Esophagus muscularis mucosa (tissue), 4 donors: ENCODE measurements at regions of chr5 and their contacts with region 1.

Region 1: GRCh38 chr5:172764849-172765765 is 5.9 kb downstream of the DUSP1 start:
- DNase-seq: peak; percentile 99
- H3K4me3 ChIP-seq: peak overlapping the region; percentile 88 to 98 (median 90)
- H3K27ac ChIP-seq: peak overlapping the region; percentile 99 to 100 (median 100)
- H3K4me1 ChIP-seq: peaks cover 28 to 40% (median 35%) of the 10 kb centered on the region in 4 donors
- H3K27me3 ChIP-seq: no peaks in the 10 kb centered on the region
- CTCF ChIP-seq: peak in 1 of 3 experiments; percentile 15
- EP300 ChIP-seq: peak; percentile 40
- POLR2A ChIP-seq: no peak

Region 2: GRCh38 chr5:172044631-172045314 is 720.3 kb before region 1 on chr5:
- intact Hi-C with region 1: no loop called
- DNase-seq: no peak
- H3K4me3 ChIP-seq: no peak overlapping the region
- H3K27ac ChIP-seq: no peak overlapping the region
- H3K4me1 ChIP-seq: peaks cover 0 to 8% (median 3%) of the 10 kb centered on the region in 4 donors
- H3K27me3 ChIP-seq: no peaks in the 10 kb centered on the region
- CTCF ChIP-seq: no peak
- EP300 ChIP-seq: no peak
- POLR2A ChIP-seq: no peak

Region 3: GRCh38 chr5:172266676-172267092 is 498.4 kb before region 1 on chr5:
- intact Hi-C with region 1: no loop called
- DNase-seq: no peak
- H3K4me3 ChIP-seq: no peak overlapping the region
- H3K27ac ChIP-seq: peak overlapping the region in 1 of 4 donors; percentile 44
- H3K4me1 ChIP-seq: peaks cover 16 to 27% (median 21%) of the 10 kb centered on the region in 4 donors
- H3K27me3 ChIP-seq: no peaks in the 10 kb centered on the region
- CTCF ChIP-seq: no peak
- EP300 ChIP-seq: no peak
- POLR2A ChIP-seq: no peak

Region 4: DNA sequence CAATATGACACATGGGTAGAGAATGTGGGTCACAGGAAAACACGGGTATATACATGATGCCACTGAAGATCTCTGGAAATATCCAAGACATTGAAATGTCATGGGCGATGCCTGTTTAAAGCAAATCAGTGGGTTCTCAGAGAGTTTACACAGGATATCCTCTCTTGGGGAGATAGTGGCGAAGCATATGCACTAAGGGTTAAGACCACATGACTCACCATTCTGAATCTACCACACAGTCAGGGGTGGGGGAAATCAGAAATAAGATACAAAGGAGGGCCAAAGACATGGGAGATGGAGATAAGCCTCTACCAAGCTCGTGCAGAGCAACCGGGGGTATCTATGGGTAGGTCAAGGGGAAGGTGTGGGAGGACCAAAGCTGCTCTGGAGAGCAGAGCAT is 369.6 kb before region 1 on chr5:
- intact Hi-C with region 1: no loop called
- DNase-seq: no peak
- H3K4me3 ChIP-seq: no peak overlapping the region
- H3K27ac ChIP-seq: no peak overlapping the region
- H3K4me1 ChIP-seq: peaks cover 3 to 9% (median 6%) of the 10 kb centered on the region in 4 donors
- H3K27me3 ChIP-seq: no peaks in the 10 kb centered on the region
- CTCF ChIP-seq: no peak
- EP300 ChIP-seq: no peak
- POLR2A ChIP-seq: no peak

Region 5: GRCh38 chr5:172688349-172689217 is 76.5 kb before region 1 on chr5:
- intact Hi-C with region 1: no loop called
- DNase-seq: no peak
- H3K4me3 ChIP-seq: no peak overlapping the region
- H3K27ac ChIP-seq: peak overlapping the region; percentile 68 to 76 (median 70)
- H3K4me1 ChIP-seq: peaks cover 49 to 83% (median 66%) of the 10 kb centered on the region in 4 donors
- H3K27me3 ChIP-seq: no peaks in the 10 kb centered on the region
- CTCF ChIP-seq: no peak
- EP300 ChIP-seq: no peak
- POLR2A ChIP-seq: no peak

Region 6: GRCh38 chr5:172714491-172715421 is 50.4 kb before region 1 on chr5:
- intact Hi-C with region 1: loop called (anchors 5 kb)
- DNase-seq: peak; percentile 95
- H3K4me3 ChIP-seq: no peak overlapping the region
- H3K27ac ChIP-seq: peak overlapping the region; percentile 67 to 75 (median 70)
- H3K4me1 ChIP-seq: peaks cover 39 to 57% (median 48%) of the 10 kb centered on the region in 4 donors
- H3K27me3 ChIP-seq: no peaks in the 10 kb centered on the region
- CTCF ChIP-seq: peak; percentile 77 to 97 (median 84)
- EP300 ChIP-seq: peak; percentile 29
- POLR2A ChIP-seq: no peak